Activated CD4-positive, alpha-beta memory T cell treated with anti-CD3 and anti-CD28 coated beads for 36 hours (primary cell): ENCODE measurements at regions of chr15 and their contacts with region 1.

Region 1: DNA sequence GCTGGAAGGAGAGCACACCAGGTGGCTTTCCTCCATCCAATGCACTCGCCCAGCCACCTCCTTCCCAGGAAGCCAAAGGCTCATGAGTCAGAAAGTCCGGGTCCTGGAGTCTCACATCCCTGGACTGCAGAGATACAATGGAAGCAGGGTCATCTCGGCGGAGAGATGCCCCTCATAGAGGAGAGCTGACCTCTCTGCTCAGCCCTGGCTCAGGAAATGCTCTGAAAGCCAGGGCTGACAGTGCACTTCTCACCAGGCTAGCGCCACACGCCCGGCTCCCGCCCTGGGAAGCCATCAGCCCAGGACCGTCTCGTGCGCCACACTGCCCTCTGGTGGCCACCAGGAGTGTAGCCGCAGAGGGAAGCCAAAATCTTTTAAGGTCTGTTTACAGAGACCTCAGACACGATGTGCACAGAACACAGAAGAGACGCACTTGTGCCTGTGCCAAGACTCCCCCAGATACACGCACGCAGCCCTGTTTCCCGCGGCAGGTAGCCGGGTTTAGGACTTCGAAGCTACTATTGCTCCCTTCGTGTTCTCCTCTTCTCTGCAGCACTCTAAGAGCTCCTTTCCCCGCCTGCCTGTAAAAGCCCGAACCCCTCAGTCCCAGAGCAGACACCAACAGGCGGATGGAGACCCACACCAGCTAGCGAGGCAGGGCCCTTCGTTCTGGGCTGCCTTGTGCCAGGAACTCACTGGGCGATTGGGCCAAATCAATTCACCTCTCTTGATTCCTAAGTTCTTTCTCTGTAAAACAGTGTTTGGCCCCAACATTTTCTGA is 9.7 kb downstream of the NTRK3 start:
- DNase-seq: peak; percentile 83
- H3K4me3 Mint-ChIP-seq: no peak overlapping the region
- H3K27ac Mint-ChIP-seq: no peak overlapping the region
- H3K4me1 Mint-ChIP-seq: peaks cover 7% of the 10 kb centered on the region
- H3K27me3 Mint-ChIP-seq: peaks cover 17% of the 10 kb centered on the region

Region 2: DNA sequence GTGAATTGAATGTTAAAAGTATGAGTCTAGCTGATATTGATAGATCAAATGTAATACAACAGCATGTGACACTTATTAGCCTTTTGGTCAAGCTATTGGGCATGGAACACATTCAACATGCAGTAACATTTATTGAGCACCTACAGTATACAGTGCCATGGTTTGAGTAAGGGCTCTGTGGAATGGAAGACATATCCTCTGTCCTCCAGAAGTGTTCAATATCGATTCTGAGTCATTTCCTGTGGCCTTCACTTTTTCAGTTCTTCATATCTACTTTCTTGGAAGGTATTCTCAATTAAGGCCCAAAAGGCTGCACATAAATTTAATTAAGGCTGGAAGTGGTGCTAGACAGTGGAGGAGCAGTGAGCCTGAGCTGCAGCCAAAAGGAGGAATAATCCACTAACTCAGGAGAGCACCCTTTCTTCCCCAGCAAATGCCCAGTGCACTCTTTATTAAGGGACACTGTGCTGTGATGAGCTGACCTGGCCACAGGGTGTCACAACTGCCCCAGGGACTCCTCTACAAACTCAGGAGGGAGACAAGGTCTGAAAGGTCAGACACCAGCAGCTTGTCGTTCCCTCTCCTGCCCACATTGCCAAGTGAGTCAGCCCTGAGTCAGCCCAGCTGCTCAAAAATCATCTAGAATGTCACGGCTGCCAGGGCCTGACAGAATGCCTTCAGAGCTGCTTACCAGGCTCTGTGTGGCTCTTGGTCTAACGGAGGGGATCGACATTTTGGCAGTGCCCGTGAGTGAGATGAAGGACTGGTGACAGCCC is 1622.4 kb before region 1 on chr15:
- CTCF ChIA-PET with region 1: interaction called, 8 read pairs
- POLR2A ChIA-PET with region 1: no interaction called
- intact Hi-C with region 1: loop called (anchors 10 kb)
- DNase-seq: peak; percentile 91
- H3K4me3 Mint-ChIP-seq: peak overlapping the region; percentile 24
- H3K27ac Mint-ChIP-seq: peak overlapping the region; percentile 55
- H3K4me1 Mint-ChIP-seq: peaks cover 38% of the 10 kb centered on the region
- H3K27me3 Mint-ChIP-seq: no peaks in the 10 kb centered on the region

Region 3: DNA sequence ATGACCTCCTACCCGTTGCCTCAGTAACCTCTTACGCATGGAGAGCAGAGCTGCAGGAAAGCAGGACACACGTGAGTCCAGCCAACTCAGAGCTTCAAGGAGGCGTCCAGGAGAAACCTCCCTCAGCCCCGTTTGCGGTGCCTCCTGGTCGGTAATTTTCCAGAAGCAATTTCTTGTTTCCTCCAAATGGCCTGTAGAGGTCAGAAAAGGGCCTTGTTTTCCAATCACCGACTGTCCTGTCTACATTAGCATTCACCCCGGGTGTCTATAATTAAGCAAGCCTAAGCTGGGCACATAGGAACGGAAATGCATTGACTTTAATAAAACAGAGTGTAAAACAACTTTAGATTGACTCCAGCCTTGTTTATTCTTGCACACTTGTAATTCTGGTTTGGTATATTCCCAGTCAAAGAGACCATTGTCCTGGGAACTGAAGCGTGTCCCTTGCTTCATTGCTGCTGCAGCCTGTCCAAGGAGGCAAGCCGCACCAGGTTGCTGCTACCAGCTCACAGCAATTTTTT is 1331.0 kb before region 1 on chr15:
- CTCF ChIA-PET with region 1: no interaction called
- POLR2A ChIA-PET with region 1: no interaction called
- intact Hi-C with region 1: loop called (anchors 10 kb)
- DNase-seq: no peak
- H3K4me3 Mint-ChIP-seq: no peak overlapping the region
- H3K27ac Mint-ChIP-seq: no peak overlapping the region
- H3K4me1 Mint-ChIP-seq: no peaks in the 10 kb centered on the region
- H3K27me3 Mint-ChIP-seq: no peaks in the 10 kb centered on the region

Region 4: DNA sequence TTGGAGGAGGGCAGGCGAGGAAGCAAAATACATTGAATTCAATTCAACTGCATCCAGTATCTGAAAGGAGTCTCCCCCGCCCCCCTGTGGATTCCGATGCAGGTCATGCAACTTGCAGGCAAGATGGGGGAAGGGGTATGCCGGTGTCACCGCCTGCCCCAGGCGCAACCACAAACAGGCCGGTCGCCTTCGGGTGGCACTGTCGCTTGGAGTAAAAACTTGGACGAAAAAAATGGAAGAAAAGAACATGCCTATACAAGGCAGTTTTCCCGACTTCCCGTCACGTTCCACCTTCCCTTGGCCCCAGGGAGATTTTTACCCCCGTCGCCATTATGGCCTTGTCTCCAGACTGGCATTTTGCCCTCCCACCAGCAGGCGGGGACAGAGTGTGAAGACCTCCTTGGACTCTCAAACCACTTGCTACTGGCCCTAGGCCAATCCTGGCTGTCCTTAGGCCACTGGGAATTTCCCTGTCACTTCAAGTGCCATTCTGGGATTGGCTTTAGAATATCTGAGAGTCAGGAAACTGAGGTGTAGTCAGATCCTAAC is 11.3 kb after region 1 on chr15:
- CTCF ChIA-PET with region 1: interaction called, 15 read pairs
- POLR2A ChIA-PET with region 1: no interaction called
- intact Hi-C with region 1: no loop called
- DNase-seq: peak; percentile 41
- H3K4me3 Mint-ChIP-seq: peak overlapping the region; percentile 20
- H3K27ac Mint-ChIP-seq: no peak overlapping the region
- H3K4me1 Mint-ChIP-seq: peaks cover 25% of the 10 kb centered on the region
- H3K27me3 Mint-ChIP-seq: peaks cover 55% of the 10 kb centered on the region

Region 5: DNA sequence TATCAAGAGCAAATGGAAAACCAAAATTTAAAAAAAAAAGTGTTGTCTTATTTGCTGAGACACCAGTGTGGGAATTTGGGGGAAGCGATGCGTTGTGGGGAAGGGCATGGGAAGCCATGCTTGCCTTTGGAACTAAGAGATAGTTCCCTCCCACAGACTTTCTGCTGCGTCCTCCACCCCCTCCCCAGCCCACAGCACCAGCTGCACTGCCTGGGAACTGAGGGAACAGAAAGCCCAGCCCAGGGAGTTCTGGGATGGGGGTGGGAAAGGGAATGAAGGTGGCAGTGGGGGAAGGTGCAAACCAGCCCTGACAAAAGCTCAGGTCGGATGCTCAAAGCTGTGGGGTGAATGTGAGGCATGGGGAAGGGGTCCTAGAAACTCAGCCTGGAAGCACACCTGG is 17.8 kb after region 1 on chr15:
- CTCF ChIA-PET with region 1: interaction called, 15 read pairs
- POLR2A ChIA-PET with region 1: no interaction called
- intact Hi-C with region 1: no loop called
- DNase-seq: no peak
- H3K4me3 Mint-ChIP-seq: no peak overlapping the region
- H3K27ac Mint-ChIP-seq: no peak overlapping the region
- H3K4me1 Mint-ChIP-seq: no peaks in the 10 kb centered on the region
- H3K27me3 Mint-ChIP-seq: peaks cover 24% of the 10 kb centered on the region

Region 6: DNA sequence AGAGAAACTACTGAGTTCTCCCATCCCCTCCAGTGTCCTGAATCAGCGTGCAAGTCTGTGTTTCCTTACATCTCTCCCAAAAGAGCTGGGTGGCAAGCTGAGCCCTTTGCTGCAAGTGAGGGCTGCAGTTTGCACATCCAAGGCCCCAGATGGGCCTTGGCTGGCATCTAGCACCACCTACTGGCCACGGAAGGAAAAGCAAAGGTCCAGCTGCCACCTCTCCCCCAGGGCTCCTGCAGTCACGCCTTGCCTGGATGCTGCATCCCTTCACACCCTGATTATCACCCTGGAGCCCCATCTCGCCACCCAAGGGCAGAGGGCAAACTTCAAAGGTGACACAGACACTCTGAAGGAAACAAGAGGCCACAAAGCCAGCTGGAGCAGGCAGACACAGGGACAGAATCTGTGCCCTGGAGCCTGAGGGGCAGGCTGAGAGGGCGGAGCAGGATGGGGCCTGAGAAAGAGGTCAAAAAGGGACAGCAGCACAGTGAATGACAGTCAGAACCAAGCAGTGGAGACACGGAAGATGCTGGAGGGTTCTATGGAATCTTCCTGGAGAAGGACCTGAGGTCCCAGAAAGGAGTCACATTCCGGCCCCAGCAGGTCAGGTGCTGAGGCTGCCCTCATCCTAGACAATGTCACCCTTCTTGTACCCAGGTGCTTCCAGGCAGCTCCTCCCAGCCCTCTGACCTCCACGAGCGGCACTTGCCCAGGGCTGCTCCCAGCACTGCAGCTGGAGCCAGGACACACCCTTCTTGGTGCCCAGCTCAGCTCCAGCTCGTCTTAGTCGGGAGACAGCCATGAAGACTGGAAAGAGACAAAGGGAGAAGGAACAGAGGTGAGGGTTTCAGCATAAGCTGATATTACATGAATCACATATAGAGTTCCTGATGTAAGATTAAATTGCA is 28.0 kb after region 1 on chr15:
- CTCF ChIA-PET with region 1: interaction called, 70 read pairs
- POLR2A ChIA-PET with region 1: no interaction called
- intact Hi-C with region 1: no loop called
- DNase-seq: peak; percentile 77
- H3K4me3 Mint-ChIP-seq: no peak overlapping the region
- H3K27ac Mint-ChIP-seq: no peak overlapping the region
- H3K4me1 Mint-ChIP-seq: no peaks in the 10 kb centered on the region
- H3K27me3 Mint-ChIP-seq: peaks cover 13% of the 10 kb centered on the region

Region 7: GRCh38 chr15:88454867-88455810 is 208.3 kb after region 1 on chr15:
- CTCF ChIA-PET with region 1: interaction called, 35 read pairs
- POLR2A ChIA-PET with region 1: no interaction called
- intact Hi-C with region 1: loop called (anchors 1 kb)
- DNase-seq: peak; percentile 66
- H3K4me3 Mint-ChIP-seq: no peak overlapping the region
- H3K27ac Mint-ChIP-seq: no peak overlapping the region
- H3K4me1 Mint-ChIP-seq: peaks cover 4% of the 10 kb centered on the region
- H3K27me3 Mint-ChIP-seq: peaks cover 2% of the 10 kb centered on the region